H1 (cell line): ENCODE measurements at regions of chr13 and their contacts with region 1.

Region 1: GRCh38 chr13:108155185-108156106 is 59.9 kb downstream of the LIG4 start:
- DNase-seq: peak; percentile 10 to 78
- H3K4me3 ChIP-seq: no peak overlapping the region; a peak in 1 of 8 replicates
- H3K27ac ChIP-seq: no peak overlapping the region
- H3K4me1 ChIP-seq: no peaks in the 10 kb centered on the region
- H3K27me3 ChIP-seq: no peaks in the 10 kb centered on the region
- CTCF ChIP-seq: peak; percentile 54 to 72 (median 61)
- EP300 ChIP-seq: no peak
- POLR2A ChIP-seq: no peak
- RAD21 ChIP-seq: peak; percentile 77 to 81

Region 2: DNA sequence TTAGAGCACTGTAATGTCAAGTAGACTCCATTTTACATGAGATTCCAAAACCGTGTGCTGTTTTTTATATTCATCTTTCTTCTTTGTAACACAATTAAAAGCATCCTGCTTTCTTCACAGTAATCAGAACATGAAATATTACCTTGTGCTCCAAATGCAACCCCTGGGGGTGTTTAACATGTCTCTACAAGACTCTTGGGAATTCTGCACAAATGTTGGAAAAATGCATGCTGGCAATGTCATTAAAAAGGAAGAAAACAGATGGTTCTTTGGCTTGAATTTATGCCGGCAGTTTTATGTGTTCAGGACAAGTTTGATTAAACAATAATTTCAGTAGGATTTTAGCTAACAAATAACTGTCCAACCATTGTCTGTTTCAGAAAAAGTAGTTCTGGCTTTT is 99.2 kb before region 1 on chr13:
- CTCF ChIA-PET with region 1: interaction called, 13 read pairs
- POLR2A ChIA-PET with region 1: no interaction called
- DNase-seq: no peak
- H3K4me3 ChIP-seq: no peak overlapping the region
- H3K27ac ChIP-seq: no peak overlapping the region
- H3K4me1 ChIP-seq: peaks cover 0 to 6% (median 4%) of the 10 kb centered on the region in 4 experiments; a peak in 5 of 7 replicates
- H3K27me3 ChIP-seq: no peaks in the 10 kb centered on the region
- CTCF ChIP-seq: no peak
- EP300 ChIP-seq: no peak
- POLR2A ChIP-seq: no peak
- RAD21 ChIP-seq: no peak

Region 3: GRCh38 chr13:108086678-108087077 is 68.8 kb before region 1 on chr13:
- CTCF ChIA-PET with region 1: interaction called, 11 read pairs
- POLR2A ChIA-PET with region 1: no interaction called
- DNase-seq: no peak
- H3K4me3 ChIP-seq: no peak overlapping the region
- H3K27ac ChIP-seq: no peak overlapping the region
- H3K4me1 ChIP-seq: peaks cover 0 to 3% (median 0%) of the 10 kb centered on the region in 4 experiments; a peak in 2 of 7 replicates
- H3K27me3 ChIP-seq: no peaks in the 10 kb centered on the region
- CTCF ChIP-seq: peak; percentile 17 to 41 (median 25); a peak in 3 of 4 replicates
- EP300 ChIP-seq: no peak
- POLR2A ChIP-seq: no peak
- RAD21 ChIP-seq: peak; percentile 38 to 44; a peak in 3 of 4 replicates

Region 4: DNA sequence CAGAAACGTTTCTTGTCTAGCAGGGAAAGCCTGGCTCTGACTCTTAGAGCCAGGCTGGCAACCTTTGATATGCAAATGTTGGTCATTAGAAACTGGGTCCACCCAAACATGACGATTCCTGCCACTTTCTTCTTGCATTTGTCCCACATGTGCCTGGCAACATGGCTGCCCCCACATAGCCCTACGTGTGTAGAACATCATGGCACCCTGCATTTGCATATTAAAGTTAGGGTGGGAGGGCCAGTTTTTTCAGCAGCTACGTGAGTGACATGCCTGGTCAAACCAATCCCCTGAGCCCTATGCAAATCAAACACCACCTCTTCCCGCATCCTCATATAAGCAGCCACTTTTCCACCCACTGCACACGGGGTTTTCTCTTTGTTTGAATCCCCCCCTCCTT is 35.1 kb before region 1 on chr13:
- CTCF ChIA-PET with region 1: interaction called, 12 read pairs
- POLR2A ChIA-PET with region 1: no interaction called
- DNase-seq: no peak
- H3K4me3 ChIP-seq: no peak overlapping the region
- H3K27ac ChIP-seq: no peak overlapping the region
- H3K4me1 ChIP-seq: no peaks in the 10 kb centered on the region; a peak in 1 of 7 replicates
- H3K27me3 ChIP-seq: no peaks in the 10 kb centered on the region
- CTCF ChIP-seq: no peak
- EP300 ChIP-seq: no peak
- POLR2A ChIP-seq: no peak
- RAD21 ChIP-seq: no peak

Region 5: GRCh38 chr13:108166078-108166477 is 10.6 kb after region 1 on chr13:
- CTCF ChIA-PET with region 1: interaction called, 41 read pairs
- POLR2A ChIA-PET with region 1: no interaction called
- DNase-seq: no peak
- H3K4me3 ChIP-seq: no peak overlapping the region
- H3K27ac ChIP-seq: no peak overlapping the region
- H3K4me1 ChIP-seq: no peaks in the 10 kb centered on the region
- H3K27me3 ChIP-seq: no peaks in the 10 kb centered on the region
- CTCF ChIP-seq: no peak
- EP300 ChIP-seq: no peak
- POLR2A ChIP-seq: no peak
- RAD21 ChIP-seq: no peak

Region 6: GRCh38 chr13:108595436-108596274 is 440.2 kb after region 1 on chr13:
- CTCF ChIA-PET with region 1: no interaction called
- POLR2A ChIA-PET with region 1: no interaction called
- DNase-seq: no peak
- H3K4me3 ChIP-seq: no peak overlapping the region
- H3K27ac ChIP-seq: no peak overlapping the region
- H3K4me1 ChIP-seq: no peaks in the 10 kb centered on the region
- H3K27me3 ChIP-seq: peaks cover 2 to 24% (median 15%) of the 10 kb centered on the region in 4 experiments
- CTCF ChIP-seq: no peak
- EP300 ChIP-seq: no peak
- POLR2A ChIP-seq: no peak
- RAD21 ChIP-seq: no peak